ENCODE measurements at regions of chr9 and their contacts with region 1.

Region 1: GRCh38 chr9:36470643-36471290 is 70.7 kb upstream of the RNF38 start:
- DNase-seq: no peak

Region 2: GRCh38 chr9:36423206-36423605 is 47.6 kb before region 1 on chr9:
- intact Hi-C with region 1: no loop called
- DNase-seq: no peak

Region 3: GRCh38 chr9:36487482-36488388 is 17.0 kb after region 1 on chr9:
- intact Hi-C with region 1: loop called (anchors 2 kb)
- DNase-seq: peak; percentile 95